ENCODE measurements at regions of chr2 and their contacts with region 1.

Region 1: DNA sequence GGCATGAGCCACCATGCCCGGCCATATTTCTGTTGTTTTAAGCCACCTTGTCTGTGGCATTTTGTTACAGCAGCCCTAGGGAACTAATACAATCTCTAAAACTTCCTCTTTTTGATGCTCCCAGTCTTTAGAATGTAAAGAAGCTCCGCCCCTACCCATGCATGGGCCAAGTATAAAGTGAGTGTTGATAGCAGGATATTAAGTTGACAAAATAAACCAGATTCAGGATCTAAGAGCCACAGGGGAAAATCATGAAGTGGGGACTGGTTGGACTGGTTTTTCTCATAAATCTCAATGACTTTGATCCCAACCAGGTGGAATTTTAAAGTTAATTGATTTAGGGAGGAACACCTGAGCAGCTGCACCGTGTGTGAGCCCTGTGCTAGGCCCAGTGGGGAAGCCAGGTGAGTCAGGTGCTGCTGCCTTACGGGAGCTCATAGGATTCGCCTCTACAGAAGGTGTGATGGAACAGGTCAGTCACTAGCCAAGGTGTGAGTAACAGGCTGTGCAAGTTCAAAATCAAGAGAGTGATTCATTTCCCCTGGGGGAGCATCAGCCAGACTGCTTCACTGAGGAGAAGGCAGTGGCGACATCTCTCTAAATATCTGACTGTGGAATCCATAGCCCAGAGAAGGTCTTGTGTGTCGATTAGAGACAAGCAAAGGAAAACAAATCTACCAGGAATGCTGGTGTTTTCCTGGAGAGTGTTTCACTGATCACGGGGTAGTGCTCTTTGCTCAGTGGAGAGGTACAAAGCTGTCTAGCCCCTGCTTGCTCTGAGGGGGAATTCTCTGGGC is 63.0 kb upstream of the MSH2 start:
- DNase-seq: no peak

Region 2: GRCh38 chr2:47386551-47386950 is 46.6 kb after region 1 on chr2:
- intact Hi-C with region 1: loop called (anchors 5 kb)
- DNase-seq: no peak

Measured in head of caudate nucleus (tissue), 42 donors.